ENCODE measurements at regions of chr2 and their contacts with region 1.

Region 1: GRCh38 chr2:37809525-37809924 is 115.6 kb upstream of the RMDN2 start:
- DNase-seq: peak; percentile 42
- H3K4me3 ChIP-seq: no peak overlapping the region
- H3K27ac ChIP-seq: no peak overlapping the region
- H3K4me1 ChIP-seq: no peaks in the 10 kb centered on the region
- H3K27me3 ChIP-seq: no peaks in the 10 kb centered on the region
- CTCF ChIP-seq: peak; percentile 63 to 65

Region 2: DNA sequence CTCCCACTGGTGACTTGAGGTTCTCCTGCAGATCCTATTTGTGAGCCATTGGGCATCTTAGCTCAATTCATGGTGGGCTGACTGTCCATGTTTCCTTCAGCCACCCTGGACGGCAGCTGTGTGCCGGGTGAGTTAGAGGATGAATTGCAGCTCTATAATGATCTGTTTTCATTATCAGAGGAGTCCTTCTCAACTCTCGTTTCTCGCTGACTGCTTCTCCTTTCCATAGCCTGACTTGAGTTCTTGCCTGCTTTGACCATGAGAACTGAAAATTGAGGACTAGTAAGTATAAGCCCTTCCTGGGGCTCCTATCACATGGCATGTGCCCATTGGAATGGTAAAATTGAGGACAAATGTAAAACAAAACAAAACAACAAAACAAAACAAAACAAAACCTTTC is 259.9 kb before region 1 on chr2:
- CTCF ChIA-PET with region 1: no interaction called
- dilution Hi-C with region 1: no loop called
- in situ Hi-C with region 1: no loop called
- intact Hi-C with region 1: loop called (anchors 1 kb)
- DNase-seq: no peak
- H3K4me3 ChIP-seq: no peak overlapping the region
- H3K27ac ChIP-seq: no peak overlapping the region
- H3K4me1 ChIP-seq: peaks cover 10% of the 10 kb centered on the region
- H3K27me3 ChIP-seq: no peaks in the 10 kb centered on the region
- CTCF ChIP-seq: no peak

Region 3: DNA sequence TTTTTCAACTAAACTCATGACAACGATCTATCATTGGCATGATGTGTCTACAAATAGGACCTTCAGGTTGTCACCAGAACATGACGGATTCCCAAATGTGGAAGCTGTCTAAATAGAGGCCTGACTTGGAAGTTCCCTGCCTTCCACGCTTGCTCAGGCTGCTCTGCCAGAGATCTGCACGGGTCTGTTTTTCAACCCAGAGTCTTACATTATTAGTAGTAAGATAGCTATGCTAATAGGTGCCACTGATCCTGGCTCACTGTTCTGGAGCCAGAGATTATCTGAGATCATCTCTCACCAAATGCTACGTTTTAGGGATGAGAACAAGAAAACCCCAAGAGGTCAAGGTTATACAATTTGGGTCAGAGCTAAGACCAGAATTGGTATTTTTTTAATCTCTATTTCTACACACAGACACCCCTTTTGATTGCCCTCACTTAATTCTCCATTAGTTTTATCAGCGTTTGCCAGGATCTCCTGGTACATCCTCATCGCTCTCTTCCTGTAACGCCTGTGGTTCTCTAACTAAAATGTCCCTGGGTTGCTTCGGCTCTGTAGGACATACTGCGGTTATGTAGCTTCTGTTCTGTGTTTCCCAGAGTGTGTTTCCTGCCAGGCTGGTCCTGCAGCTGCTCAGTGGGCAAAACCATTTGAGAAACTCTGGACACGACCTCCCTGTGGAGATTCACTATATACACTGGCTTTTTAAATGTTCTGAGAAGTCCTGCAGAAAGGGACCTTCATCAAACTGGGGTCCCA is 143.7 kb before region 1 on chr2:
- CTCF ChIA-PET with region 1: no interaction called
- dilution Hi-C with region 1: no loop called
- in situ Hi-C with region 1: loop called in 1 of 2 experiments (anchors 5 kb)
- intact Hi-C with region 1: no loop called
- DNase-seq: no peak
- H3K4me3 ChIP-seq: no peak overlapping the region
- H3K27ac ChIP-seq: no peak overlapping the region
- H3K4me1 ChIP-seq: peaks cover 21% of the 10 kb centered on the region
- H3K27me3 ChIP-seq: no peaks in the 10 kb centered on the region
- CTCF ChIP-seq: no peak

Region 4: GRCh38 chr2:37837628-37838328 is 28.3 kb after region 1 on chr2:
- CTCF ChIA-PET with region 1: no interaction called
- dilution Hi-C with region 1: no loop called
- in situ Hi-C with region 1: no loop called
- intact Hi-C with region 1: no loop called
- DNase-seq: no peak
- H3K4me3 ChIP-seq: no peak overlapping the region
- H3K27ac ChIP-seq: no peak overlapping the region
- H3K4me1 ChIP-seq: no peaks in the 10 kb centered on the region
- H3K27me3 ChIP-seq: no peaks in the 10 kb centered on the region
- CTCF ChIP-seq: no peak

Region 5: GRCh38 chr2:37934591-37935513 is 125.3 kb after region 1 on chr2:
- CTCF ChIA-PET with region 1: no interaction called
- dilution Hi-C with region 1: no loop called
- in situ Hi-C with region 1: no loop called
- intact Hi-C with region 1: no loop called
- DNase-seq: no peak
- H3K4me3 ChIP-seq: no peak overlapping the region
- H3K27ac ChIP-seq: no peak overlapping the region
- H3K4me1 ChIP-seq: no peaks in the 10 kb centered on the region
- H3K27me3 ChIP-seq: no peaks in the 10 kb centered on the region
- CTCF ChIP-seq: no peak